Activated T-helper 1 cell treated with anti-CD3 and anti-CD28 coated beads, Interleukin-12 subunit alpha, Interleukin-12 subunit beta, Interleukin-2, Interleukin-4 antibody, amounts not matched to agents 30 ng/mL and 10 ng/mL and 1 ng/mL, durations not matched to agents 14 hours and 24 hours and 36 hours (primary cell): ENCODE measurements at regions of chr13 and their contacts with region 1.

Region 1: DNA sequence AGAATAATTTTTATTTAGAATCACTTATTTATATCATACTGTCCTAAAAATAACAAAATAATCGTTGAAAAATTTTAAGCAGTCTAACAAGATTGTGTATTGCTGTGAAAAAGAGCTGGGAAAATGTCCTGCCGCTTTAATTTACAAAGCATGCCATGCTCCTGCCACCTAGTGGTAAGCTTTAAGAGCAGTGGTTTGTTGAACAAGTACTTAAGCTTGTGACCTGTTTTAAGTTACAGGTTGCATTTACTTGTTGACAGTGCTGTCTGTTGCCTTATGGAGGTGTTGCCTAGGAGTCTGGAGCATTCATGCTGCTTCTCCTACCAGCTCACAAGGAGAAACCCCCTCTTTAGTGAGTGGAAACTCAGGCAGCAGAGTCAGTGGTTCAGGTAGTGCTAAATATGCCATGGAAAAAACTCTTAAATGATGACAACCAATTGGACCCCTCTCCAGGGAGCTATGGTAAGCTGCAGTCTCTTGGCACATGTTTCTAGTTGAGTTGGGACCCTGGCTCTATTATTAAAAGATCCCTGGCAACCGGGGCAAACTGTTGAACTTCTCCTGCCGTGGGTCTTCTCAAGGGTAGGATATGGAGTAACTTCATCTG is 68.4 kb downstream of the SPATA13 start:
- DNase-seq: no peak
- H3K4me3 Mint-ChIP-seq: no peak overlapping the region
- H3K27ac Mint-ChIP-seq: peak overlapping the region; percentile 40
- H3K4me1 Mint-ChIP-seq: peaks cover 56% of the 10 kb centered on the region
- H3K27me3 Mint-ChIP-seq: no peaks in the 10 kb centered on the region

Region 2: DNA sequence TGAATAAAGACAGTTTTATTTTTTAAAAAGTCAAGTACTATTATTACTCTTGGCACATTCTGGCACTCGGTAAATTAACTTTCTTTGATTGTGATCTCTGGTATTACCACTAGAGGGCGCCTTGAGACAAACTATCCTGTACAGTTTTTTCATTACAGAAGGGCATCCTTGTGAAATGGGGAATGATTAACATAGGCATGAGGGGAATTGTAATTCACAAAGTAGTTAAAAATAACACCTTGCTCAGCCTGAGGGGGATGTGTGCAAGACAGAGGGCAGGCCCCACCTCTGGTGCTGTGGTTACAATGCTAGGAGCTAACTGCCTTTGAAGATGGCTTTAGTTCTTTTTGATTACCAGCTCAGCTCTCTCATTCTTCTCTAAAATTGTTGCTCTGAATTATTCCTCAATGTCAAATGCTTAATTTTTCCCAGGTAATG is 307.5 kb before region 1 on chr13:
- intact Hi-C with region 1: loop called (anchors 2 kb)
- DNase-seq: peak; percentile 24
- H3K4me3 Mint-ChIP-seq: no peak overlapping the region
- H3K27ac Mint-ChIP-seq: no peak overlapping the region
- H3K4me1 Mint-ChIP-seq: peaks cover 9% of the 10 kb centered on the region
- H3K27me3 Mint-ChIP-seq: peaks cover 39% of the 10 kb centered on the region

Region 3: GRCh38 chr13:24020375-24020830 is 208.6 kb before region 1 on chr13:
- intact Hi-C with region 1: loop called (anchors 1 kb)
- DNase-seq: no peak
- H3K4me3 Mint-ChIP-seq: no peak overlapping the region
- H3K27ac Mint-ChIP-seq: no peak overlapping the region
- H3K4me1 Mint-ChIP-seq: peaks cover 6% of the 10 kb centered on the region
- H3K27me3 Mint-ChIP-seq: peaks cover 1% of the 10 kb centered on the region

Region 4: GRCh38 chr13:24178847-24179485 is 50.0 kb before region 1 on chr13:
- intact Hi-C with region 1: loop called (anchors 5 kb)
- DNase-seq: no peak
- H3K4me3 Mint-ChIP-seq: no peak overlapping the region
- H3K27ac Mint-ChIP-seq: peak overlapping the region; percentile 75
- H3K4me1 Mint-ChIP-seq: peaks cover 39% of the 10 kb centered on the region
- H3K27me3 Mint-ChIP-seq: no peaks in the 10 kb centered on the region

Region 5: GRCh38 chr13:24254146-24254841 is 25.3 kb after region 1 on chr13:
- intact Hi-C with region 1: loop called (anchors 1 kb)
- DNase-seq: peak; percentile 47
- H3K4me3 Mint-ChIP-seq: peak overlapping the region; percentile 86
- H3K27ac Mint-ChIP-seq: peak overlapping the region; percentile 91
- H3K4me1 Mint-ChIP-seq: peaks cover 84% of the 10 kb centered on the region
- H3K27me3 Mint-ChIP-seq: no peaks in the 10 kb centered on the region